ENCODE measurements at regions of chr3 and their contacts with region 1.

Region 1: GRCh38 chr3:169149349-169149890 is 514.1 kb downstream of the MECOM start:
- DNase-seq: peak; percentile 81
- H3K4me3 ChIP-seq: peak overlapping the region; percentile 71
- H3K27ac ChIP-seq: peak overlapping the region; percentile 91
- H3K4me1 ChIP-seq: peaks cover 39% of the 10 kb centered on the region
- H3K27me3 ChIP-seq: peaks cover 67% of the 10 kb centered on the region
- CTCF ChIP-seq: peak; percentile 92

Region 2: GRCh38 chr3:169041677-169042171 is 107.7 kb before region 1 on chr3:
- intact Hi-C with region 1: no loop called
- DNase-seq: no peak
- H3K4me3 ChIP-seq: no peak overlapping the region
- H3K27ac ChIP-seq: peak overlapping the region; percentile 12
- H3K4me1 ChIP-seq: peaks cover 3% of the 10 kb centered on the region
- H3K27me3 ChIP-seq: no peaks in the 10 kb centered on the region
- CTCF ChIP-seq: peak; percentile 72

Region 3: GRCh38 chr3:169390271-169391230 is 241.1 kb after region 1 on chr3:
- intact Hi-C with region 1: loop called (anchors 10 kb)
- DNase-seq: no peak
- H3K4me3 ChIP-seq: no peak overlapping the region
- H3K27ac ChIP-seq: peak overlapping the region; percentile 87
- H3K4me1 ChIP-seq: peaks cover 31% of the 10 kb centered on the region
- H3K27me3 ChIP-seq: no peaks in the 10 kb centered on the region
- CTCF ChIP-seq: no peak

Region 4: DNA sequence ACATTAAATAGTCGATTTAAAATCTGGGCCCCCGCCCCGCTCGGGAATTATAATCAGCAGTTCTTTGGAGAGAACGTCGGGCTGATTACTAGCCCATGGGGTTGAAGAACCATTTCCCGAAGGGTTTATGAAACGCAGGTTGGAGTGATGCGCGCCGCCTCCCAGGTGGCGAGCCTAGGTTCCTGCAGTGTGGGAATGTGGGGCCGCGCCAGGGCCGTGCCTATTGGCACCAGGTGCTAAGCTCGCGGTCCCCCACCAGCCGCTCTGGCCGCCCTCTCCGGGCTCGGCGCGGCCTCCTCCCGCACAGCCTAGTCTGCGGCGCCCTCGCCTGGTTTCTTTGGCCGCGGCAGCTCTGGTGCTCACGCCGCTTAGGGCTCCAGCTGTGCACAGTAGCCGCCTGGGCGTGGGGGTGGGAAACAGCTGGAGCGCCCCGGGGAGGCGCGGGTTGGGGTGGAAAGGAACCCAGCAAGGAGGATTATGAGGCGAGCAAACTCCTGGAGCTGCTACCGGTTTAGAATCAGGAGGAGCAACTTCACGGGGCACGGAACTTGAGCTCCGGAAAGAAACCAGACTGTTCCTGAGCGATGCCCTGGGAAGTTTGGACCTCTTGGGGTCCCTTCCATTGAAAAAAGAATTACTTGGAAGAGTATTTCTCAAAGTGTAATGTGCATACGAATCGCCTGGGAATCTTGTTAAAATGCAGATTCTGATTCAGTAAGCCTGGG is 519.7 kb after region 1 on chr3:
- intact Hi-C with region 1: loop called (anchors 5 kb)
- DNase-seq: peak; percentile 76
- H3K4me3 ChIP-seq: peak overlapping the region; percentile 70
- H3K27ac ChIP-seq: peak overlapping the region; percentile 71
- H3K4me1 ChIP-seq: peaks cover 21% of the 10 kb centered on the region
- H3K27me3 ChIP-seq: peaks cover 91% of the 10 kb centered on the region
- CTCF ChIP-seq: peak; percentile 89